ENCODE measurements at regions of chr19 and their contacts with region 1.

Region 1: DNA sequence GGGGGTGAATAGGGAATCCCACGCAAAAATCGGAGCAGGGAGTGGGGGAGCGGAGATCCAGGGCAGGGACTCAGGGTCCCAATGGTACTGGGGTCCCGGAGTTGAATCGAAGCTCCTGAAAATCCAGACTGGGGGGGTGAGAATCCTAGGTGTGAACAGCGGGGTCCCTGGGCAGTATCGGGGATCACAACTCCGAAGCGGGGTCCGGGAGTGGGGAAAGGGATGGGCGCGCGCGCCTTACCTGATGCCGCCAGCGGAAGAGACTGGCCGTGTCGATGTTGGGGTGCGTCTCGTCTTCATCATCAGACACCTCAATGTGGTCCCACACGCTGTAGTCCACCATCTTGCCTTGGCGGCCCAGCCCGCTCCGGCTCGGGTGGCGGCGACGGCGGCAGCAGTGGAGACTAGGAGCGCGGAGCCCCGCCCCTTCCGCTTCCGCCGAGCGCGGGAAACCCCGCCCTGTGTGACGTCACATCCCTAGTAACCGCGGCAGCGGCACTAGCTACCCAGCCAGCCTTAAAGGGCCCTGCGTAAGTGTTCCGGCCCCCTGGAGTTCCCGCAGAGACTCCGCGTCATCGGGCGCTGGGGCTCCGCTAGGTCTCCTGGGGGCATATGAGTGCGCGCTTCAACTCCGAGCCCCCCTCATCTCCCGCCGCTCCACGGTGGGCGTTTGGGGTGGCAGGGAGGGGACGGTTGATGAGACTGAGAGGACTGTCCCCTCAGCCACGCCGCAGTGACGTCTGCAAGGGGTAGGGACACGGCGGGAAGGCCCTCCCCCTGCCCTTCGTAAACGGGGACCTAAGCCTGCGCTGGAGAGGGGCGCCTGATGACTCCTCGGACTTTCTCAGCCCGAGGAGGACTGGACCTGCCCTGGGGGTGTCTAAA is at the start of gene CDC37:
- DNase-seq: peak; percentile 99
- H3K4me3 Mint-ChIP-seq: peak within 1 kb of the TSS; percentile 89
- H3K27ac Mint-ChIP-seq: peak within 1 kb of the TSS; percentile 84
- H3K4me1 Mint-ChIP-seq: peaks cover 67% of the 10 kb centered on the region
- H3K27me3 Mint-ChIP-seq: no peaks in the 10 kb centered on the region
- total RNA-seq, gene CDC37: 189 to 207 TPM

Region 2: DNA sequence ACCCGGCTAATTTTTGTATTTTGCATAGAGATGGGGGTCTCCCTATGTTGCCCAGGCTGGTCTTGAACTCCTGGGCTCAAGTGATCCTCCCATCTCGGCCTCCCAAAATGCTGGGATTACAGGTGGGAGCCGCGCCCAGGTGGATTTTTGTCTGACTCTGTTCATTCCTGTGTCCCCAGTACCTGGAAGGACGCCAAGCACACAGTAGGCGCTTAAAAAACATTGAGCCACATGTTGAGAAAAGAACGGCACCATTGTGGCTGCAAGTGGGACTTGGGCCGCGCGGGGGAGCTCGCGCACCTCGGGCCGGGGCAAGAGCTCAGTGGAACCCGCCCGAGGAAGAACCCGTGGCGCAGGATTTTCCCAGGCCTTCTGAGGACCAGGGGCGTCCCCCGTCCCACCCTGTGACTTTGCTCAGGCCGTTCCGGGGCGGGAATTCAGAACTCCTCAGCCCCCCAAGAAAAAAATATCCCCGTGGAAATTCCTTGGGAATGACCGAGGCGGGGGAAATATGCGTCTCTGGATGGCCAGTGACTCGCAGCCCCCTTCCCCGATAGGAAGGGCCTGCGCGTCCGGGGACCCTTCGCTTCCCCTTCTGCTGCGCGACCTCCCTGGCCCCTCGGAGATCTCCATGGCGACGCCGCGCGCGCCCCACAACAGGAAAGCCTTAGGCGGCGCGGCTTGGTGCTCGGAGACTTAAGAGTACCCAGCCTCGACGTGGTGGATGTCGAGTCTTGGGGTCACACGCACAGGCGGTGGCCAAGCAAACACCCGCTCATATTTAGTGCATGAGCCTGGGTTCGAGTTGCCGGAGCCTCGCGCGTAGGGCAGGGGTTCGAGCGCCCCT is 133.8 kb before region 1 on chr19:
- CTCF ChIA-PET with region 1: interaction called, 35 read pairs
- POLR2A ChIA-PET with region 1: interaction called, 5 read pairs
- intact Hi-C with region 1: no loop called
- DNase-seq: peak; percentile 93
- H3K4me3 Mint-ChIP-seq: peak overlapping the region; percentile 85
- H3K27ac Mint-ChIP-seq: peak overlapping the region; percentile 89
- H3K4me1 Mint-ChIP-seq: peaks cover 30% of the 10 kb centered on the region
- H3K27me3 Mint-ChIP-seq: no peaks in the 10 kb centered on the region

Region 3: DNA sequence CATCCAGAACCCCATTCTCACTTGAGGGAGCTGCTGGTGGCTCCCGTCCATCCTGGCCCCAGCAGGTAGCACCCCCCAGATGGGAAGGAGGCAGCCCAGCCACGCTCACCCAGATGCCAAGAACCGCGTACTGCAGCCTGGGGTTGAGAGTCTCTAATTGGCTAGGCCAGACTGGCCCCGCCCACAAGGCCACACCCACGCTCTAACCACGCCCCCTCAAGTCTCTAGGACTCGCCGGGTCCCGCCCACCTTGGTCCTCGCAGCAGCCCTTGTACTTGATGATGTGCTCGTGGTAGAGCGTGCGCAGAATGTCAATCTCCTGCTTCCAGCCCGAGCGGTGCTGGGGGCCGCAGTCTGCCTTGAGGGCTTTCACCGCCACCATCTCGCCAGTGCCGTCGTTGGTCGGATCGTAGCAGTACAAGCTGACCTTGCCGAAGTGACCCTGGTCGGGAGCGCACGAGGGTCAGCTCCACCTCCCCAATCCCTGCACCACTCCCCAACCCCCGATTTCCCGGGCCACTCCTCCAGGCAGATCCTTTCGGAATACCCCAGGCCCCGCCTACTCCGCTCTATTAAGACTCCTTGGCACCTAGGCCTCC is 49.5 kb before region 1 on chr19:
- CTCF ChIA-PET with region 1: no interaction called
- POLR2A ChIA-PET with region 1: no interaction called
- intact Hi-C with region 1: no loop called
- DNase-seq: peak; percentile 58
- H3K4me3 Mint-ChIP-seq: no peak overlapping the region
- H3K27ac Mint-ChIP-seq: no peak overlapping the region
- H3K4me1 Mint-ChIP-seq: no peaks in the 10 kb centered on the region
- H3K27me3 Mint-ChIP-seq: no peaks in the 10 kb centered on the region

Region 4: GRCh38 chr19:10380313-10381102 is 22.9 kb before region 1 on chr19 and contains the start of gene TYK2:
- CTCF ChIA-PET with region 1: interaction called, 5 read pairs
- POLR2A ChIA-PET with region 1: interaction called, 5 read pairs
- intact Hi-C with region 1: loop called (anchors 1 kb)
- DNase-seq: peak; percentile 98
- H3K4me3 Mint-ChIP-seq: peak within 1 kb of the TSS; percentile 88
- H3K27ac Mint-ChIP-seq: peak within 1 kb of the TSS; percentile 88
- H3K4me1 Mint-ChIP-seq: peaks cover 20% of the 10 kb centered on the region
- H3K27me3 Mint-ChIP-seq: no peaks in the 10 kb centered on the region
- total RNA-seq, gene TYK2: 168 to 186 TPM

Region 5: DNA sequence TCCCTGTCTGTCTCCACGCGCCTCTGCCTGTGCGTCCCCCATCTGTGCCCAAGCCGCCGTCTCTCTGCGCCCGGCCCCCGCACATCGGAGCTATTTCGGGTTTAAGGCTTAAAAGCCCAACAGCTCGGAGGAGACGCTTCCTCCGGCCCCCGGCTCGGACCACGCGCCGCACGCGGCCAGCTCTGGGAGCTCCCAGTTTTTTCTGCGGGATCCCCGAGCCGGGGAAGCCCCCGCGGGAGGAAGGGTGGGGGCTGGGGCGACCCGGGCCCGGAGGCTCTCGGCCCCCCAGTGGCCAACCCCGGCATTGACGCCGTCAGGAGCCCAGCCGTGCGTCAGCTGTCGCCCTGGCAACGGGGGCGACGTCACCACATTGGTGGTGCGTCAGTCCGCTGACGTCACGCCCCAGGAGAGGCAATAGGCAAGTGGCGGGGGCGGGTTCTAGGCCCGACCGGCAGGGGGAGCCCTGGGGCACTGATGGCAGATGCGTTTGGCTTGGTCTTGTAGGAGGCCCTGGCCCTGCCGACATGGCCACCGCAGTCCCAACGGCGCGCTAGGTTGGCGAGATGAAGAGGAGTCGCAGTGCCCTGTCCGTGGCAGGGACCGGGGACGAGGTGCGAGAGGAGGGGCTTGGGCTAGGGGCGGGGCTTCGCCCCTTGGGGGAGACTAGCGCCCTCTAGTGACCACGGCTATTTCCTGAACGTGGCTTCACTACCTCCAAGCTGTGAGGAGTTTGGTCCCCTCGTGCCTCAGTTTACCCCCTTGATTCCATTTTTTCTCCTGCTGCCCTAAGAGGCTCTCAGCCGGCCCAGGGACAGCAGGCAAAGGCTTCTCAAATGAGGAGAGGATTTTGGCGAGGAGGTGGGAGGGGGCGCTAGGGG is 13.2 kb after region 1 on chr19:
- CTCF ChIA-PET with region 1: interaction called, 836 read pairs
- POLR2A ChIA-PET with region 1: interaction called, 22 read pairs
- intact Hi-C with region 1: loop called (anchors 1 kb)
- DNase-seq: peak; percentile 96
- H3K4me3 Mint-ChIP-seq: peak overlapping the region; percentile 73
- H3K27ac Mint-ChIP-seq: peak overlapping the region; percentile 86
- H3K4me1 Mint-ChIP-seq: peaks cover 51% of the 10 kb centered on the region
- H3K27me3 Mint-ChIP-seq: peaks cover 35% of the 10 kb centered on the region

Region 6: GRCh38 chr19:10431943-10432735 is 28.8 kb after region 1 on chr19:
- CTCF ChIA-PET with region 1: interaction called, 836 read pairs
- POLR2A ChIA-PET with region 1: interaction called, 8 read pairs
- intact Hi-C with region 1: loop called (anchors 1 kb)
- DNase-seq: peak; percentile 71
- H3K4me3 Mint-ChIP-seq: peak overlapping the region; percentile 73
- H3K27ac Mint-ChIP-seq: peak overlapping the region; percentile 60
- H3K4me1 Mint-ChIP-seq: peaks cover 53% of the 10 kb centered on the region
- H3K27me3 Mint-ChIP-seq: peaks cover 35% of the 10 kb centered on the region

Region 7: GRCh38 chr19:10502524-10503001 is 99.2 kb after region 1 on chr19:
- CTCF ChIA-PET with region 1: interaction called, 6 read pairs
- POLR2A ChIA-PET with region 1: interaction called, 3 read pairs
- intact Hi-C with region 1: loop called (anchors 2 kb)
- DNase-seq: peak; percentile 94
- H3K4me3 Mint-ChIP-seq: peak overlapping the region; percentile 90
- H3K27ac Mint-ChIP-seq: peak overlapping the region; percentile 84
- H3K4me1 Mint-ChIP-seq: peaks cover 35% of the 10 kb centered on the region
- H3K27me3 Mint-ChIP-seq: no peaks in the 10 kb centered on the region